Ascending aorta (tissue), 2 donors: ENCODE measurements at regions of chr1 and their contacts with region 1.

Region 1: GRCh38 chr1:150696590-150697524 is at the start of gene GOLPH3L:
- DNase-seq: peak; percentile 89 to 97
- H3K4me3 ChIP-seq: peak within 1 kb of the TSS; percentile 77 to 79
- H3K27ac ChIP-seq: peak within 1 kb of the TSS; percentile 29 to 61
- H3K4me1 ChIP-seq: peaks cover 0 to 2% of the 10 kb centered on the region in 2 donors
- H3K27me3 ChIP-seq: no peaks in the 10 kb centered on the region
- CTCF ChIP-seq: peak in 2 of 3 experiments; percentile 8 to 9
- total RNA-seq, gene GOLPH3L: 14.7 TPM

Region 2: GRCh38 chr1:150548632-150549495 is 148.0 kb before region 1 on chr1 and contains the start of gene ADAMTSL4:
- intact Hi-C with region 1: loop called (anchors 10 kb)
- DNase-seq: peak in 1 of 2 donors; percentile 87
- H3K4me3 ChIP-seq: peak within 1 kb of the TSS; percentile 70 to 88
- H3K27ac ChIP-seq: peak within 1 kb of the TSS; percentile 97 to 100
- H3K4me1 ChIP-seq: peaks cover 26 to 43% of the 10 kb centered on the region in 2 donors
- H3K27me3 ChIP-seq: no peaks in the 10 kb centered on the region
- CTCF ChIP-seq: peak in 1 of 3 experiments; percentile 33
- total RNA-seq, gene ADAMTSL4: 85.3 TPM

Region 3: GRCh38 chr1:150629115-150629928 is 67.5 kb before region 1 on chr1 and contains the start of gene ENSA:
- intact Hi-C with region 1: loop called (anchors 5 kb)
- DNase-seq: peak; percentile 97 to 99
- H3K4me3 ChIP-seq: peak within 1 kb of the TSS; percentile 83 to 85
- H3K27ac ChIP-seq: peak within 1 kb of the TSS; percentile 88 to 97
- H3K4me1 ChIP-seq: peaks cover 6 to 10% of the 10 kb centered on the region in 2 donors
- H3K27me3 ChIP-seq: no peaks in the 10 kb centered on the region
- CTCF ChIP-seq: no peak
- total RNA-seq, gene ENSA: 138 TPM

Region 4: DNA sequence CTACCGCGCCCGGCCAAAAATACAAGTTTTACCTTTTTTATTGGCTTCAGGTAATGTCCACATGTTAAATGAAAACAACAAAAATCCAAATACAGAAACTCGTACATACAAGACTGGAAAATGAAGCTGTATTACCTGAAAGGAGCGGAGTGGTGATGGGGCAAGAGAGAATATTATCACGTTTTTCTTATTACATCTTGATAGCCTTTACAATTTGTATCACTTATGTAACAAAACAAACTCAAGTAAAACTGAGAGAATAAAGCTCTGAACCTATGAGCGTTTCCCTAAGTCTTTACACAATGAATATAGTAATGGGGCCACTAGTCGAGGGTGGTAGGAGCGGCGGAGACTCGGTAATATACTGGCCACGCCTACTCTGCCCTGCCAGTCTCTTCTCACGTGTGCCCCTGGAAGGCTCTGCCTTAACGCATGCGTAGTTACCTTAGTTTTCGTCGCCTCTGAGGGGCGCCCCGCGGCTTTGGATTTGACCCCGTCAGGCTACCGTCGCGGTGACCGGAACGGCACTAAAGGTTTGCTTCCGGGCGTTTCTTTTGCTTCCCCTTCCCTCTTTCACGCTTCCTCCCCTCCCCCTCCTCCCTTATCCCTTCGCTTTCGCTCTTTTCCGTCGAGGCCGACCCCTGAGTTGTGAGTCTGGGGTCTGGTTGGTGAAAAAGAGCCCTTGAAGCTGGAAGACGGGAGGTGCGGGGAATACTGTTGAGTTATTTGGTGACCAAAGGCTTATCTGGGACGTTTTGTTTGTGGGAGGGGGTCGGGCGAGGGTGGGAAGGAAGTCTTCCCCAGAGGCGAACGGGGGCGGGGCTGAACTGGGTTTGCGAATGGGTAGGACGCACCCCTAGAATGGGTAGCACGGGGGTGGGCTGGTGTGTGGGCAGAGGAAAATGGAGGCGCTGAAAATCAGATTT is 229.2 kb after region 1 on chr1 and contains the start of gene SETDB1:
- intact Hi-C with region 1: loop called (anchors 5 kb)
- DNase-seq: peak; percentile 81 to 98
- H3K4me3 ChIP-seq: peak within 1 kb of the TSS; percentile 73 to 80
- H3K27ac ChIP-seq: peak within 1 kb of the TSS; percentile 71 to 84
- H3K4me1 ChIP-seq: peaks cover 0 to 4% of the 10 kb centered on the region in 2 donors
- H3K27me3 ChIP-seq: no peaks in the 10 kb centered on the region
- CTCF ChIP-seq: no peak
- total RNA-seq, gene SETDB1: 21.3 TPM

Region 5: GRCh38 chr1:150979092-150980056 is 282.5 kb after region 1 on chr1:
- intact Hi-C with region 1: loop called (anchors 10 kb)
- DNase-seq: peak; percentile 42 to 96
- H3K4me3 ChIP-seq: peak overlapping the region in 1 of 2 donors; percentile 50
- H3K27ac ChIP-seq: peak overlapping the region; percentile 95 to 99
- H3K4me1 ChIP-seq: peaks cover 11 to 34% of the 10 kb centered on the region in 2 donors
- H3K27me3 ChIP-seq: no peaks in the 10 kb centered on the region
- CTCF ChIP-seq: peak; percentile 99

Region 6: GRCh38 chr1:151008190-151008860 is 311.5 kb after region 1 on chr1 and contains the start of gene PRUNE1:
- intact Hi-C with region 1: loop called (anchors 10 kb)
- DNase-seq: peak; percentile 84 to 97
- H3K4me3 ChIP-seq: peak within 1 kb of the TSS; percentile 70 to 71
- H3K27ac ChIP-seq: peak within 1 kb of the TSS; percentile 85 to 87
- H3K4me1 ChIP-seq: peaks cover 11 to 48% of the 10 kb centered on the region in 2 donors
- H3K27me3 ChIP-seq: no peaks in the 10 kb centered on the region
- CTCF ChIP-seq: no peak
- total RNA-seq, gene PRUNE1: 36.5 TPM

Region 7: DNA sequence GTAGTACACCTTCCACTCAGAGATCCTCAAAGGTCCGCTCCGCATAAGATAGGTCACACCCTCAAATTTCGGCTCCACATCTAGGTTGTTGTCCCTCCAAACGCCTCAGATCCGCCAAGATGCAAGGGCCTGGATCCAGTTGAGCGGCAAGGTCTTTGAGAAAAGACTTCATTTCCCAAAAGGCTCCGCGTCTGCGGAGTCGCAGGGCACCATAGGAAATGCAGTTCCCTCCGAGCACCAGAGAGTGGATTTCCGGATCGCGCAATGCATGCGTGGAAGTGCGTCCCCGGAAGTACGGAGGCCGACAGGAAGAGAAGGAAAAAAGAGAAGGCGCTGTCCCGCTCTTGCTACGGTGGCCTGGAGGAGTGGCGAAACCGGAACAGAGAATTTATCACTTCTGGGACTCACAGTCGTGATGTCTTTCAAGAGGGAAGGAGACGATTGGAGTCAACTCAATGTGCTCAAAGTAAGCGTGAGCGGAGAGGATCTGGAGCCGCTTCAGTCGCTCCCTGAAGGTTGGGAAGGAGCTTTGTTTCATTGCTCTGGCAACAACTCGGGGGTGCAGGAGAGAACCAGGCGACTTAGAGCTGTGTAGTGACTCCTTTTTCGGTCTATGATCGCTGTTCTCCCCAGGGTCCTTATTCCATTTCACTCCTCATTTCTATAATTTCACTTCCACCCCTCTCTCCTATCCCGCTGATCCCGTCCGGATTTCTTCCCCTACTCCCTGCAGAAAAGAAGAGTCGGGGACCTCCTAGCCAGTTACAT is 469.1 kb after region 1 on chr1 and contains the starts of genes LYSMD1 and SCNM1:
- intact Hi-C with region 1: loop called (anchors 10 kb)
- DNase-seq: peak; percentile 91 to 99
- H3K4me3 ChIP-seq: peak within 1 kb of the TSS; percentile 65 to 71
- H3K27ac ChIP-seq: peak within 1 kb of the TSS; percentile 77 to 86
- H3K4me1 ChIP-seq: peaks cover 10 to 23% of the 10 kb centered on the region in 2 donors
- H3K27me3 ChIP-seq: no peaks in the 10 kb centered on the region
- CTCF ChIP-seq: no peak
- total RNA-seq, gene LYSMD1: 0.85 TPM
- total RNA-seq, gene SCNM1: 27.4 TPM